Sigmoid colon (tissue), 7 donors: ENCODE measurements at regions of chr6 and their contacts with region 1.

Region 1: DNA sequence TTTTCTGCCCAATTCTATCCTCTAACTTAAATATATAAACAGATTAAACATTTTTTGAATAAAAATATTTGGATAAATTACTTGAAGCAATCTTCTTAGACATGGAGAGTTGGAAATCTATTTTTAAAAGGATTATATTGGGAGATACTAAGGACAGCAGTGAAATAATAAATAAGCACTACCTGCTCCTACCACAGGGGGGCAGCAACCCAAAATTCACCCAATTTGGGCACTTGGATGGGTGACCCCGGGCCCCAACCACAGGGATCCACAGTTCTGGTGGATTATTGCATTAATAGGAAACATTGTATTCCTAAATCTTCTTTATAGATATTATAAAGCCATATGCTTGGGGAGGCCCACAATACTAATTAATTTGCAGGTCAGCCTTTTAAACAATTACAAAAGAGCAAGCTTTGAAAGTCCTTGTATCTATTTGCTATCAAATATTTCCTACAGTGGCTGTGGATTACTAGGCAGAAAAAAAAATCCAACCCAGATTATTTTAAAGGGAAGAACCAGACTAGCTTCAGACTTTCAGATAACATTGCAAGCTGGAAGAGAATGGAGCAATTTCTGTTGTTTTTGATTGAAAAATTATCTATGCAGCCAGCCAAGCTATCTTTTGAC is 66.4 kb upstream of the PDE10A start:
- DNase-seq: no peak
- H3K4me3 ChIP-seq: no peak overlapping the region
- H3K27ac ChIP-seq: no peak overlapping the region
- H3K4me1 ChIP-seq: peaks cover 0 to 5% (median 0%) of the 10 kb centered on the region in 4 donors
- H3K27me3 ChIP-seq: no peaks in the 10 kb centered on the region
- CTCF ChIP-seq: peak in 3 of 4 experiments; percentile 47 to 77 (median 54)
- EP300 ChIP-seq: no peak
- POLR2A ChIP-seq: no peak

Region 2: GRCh38 chr6:166106076-166106686 is 376.8 kb after region 1 on chr6:
- intact Hi-C with region 1: loop called (anchors 10 kb)
- DNase-seq: peak; percentile 82
- H3K4me3 ChIP-seq: no peak overlapping the region
- H3K27ac ChIP-seq: no peak overlapping the region
- H3K4me1 ChIP-seq: no peaks in the 10 kb centered on the region
- H3K27me3 ChIP-seq: no peaks in the 10 kb centered on the region
- CTCF ChIP-seq: peak; percentile 76 to 87 (median 82)
- EP300 ChIP-seq: no peak
- POLR2A ChIP-seq: no peak

Region 3: DNA sequence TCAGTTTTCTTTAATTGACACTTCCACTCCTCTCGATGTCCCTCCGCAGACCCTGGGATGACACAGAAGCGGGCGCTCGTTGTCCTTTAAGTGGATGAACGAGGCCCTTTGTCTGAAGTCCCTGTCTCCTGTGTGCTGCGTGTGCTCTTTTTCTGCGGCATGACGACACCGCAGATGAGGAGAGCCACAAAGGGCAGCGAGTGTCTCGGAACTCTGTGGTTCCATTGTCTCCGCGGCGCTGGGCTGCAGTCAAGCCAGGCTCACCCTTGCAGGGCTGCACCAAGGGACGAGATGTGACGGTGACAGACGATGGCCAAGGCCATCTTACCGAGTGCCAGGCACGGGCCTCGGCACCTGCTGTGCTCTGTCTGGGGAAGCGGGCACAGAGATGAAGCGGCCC is 568.2 kb after region 1 on chr6:
- intact Hi-C with region 1: no loop called
- DNase-seq: no peak
- H3K4me3 ChIP-seq: no peak overlapping the region
- H3K27ac ChIP-seq: no peak overlapping the region
- H3K4me1 ChIP-seq: no peaks in the 10 kb centered on the region
- H3K27me3 ChIP-seq: peaks cover 0 to 7% (median 0%) of the 10 kb centered on the region in 3 donors
- CTCF ChIP-seq: no peak
- EP300 ChIP-seq: no peak
- POLR2A ChIP-seq: no peak